ENCODE measurements at regions of chr3 and their contacts with region 1.

Region 1: GRCh38 chr3:141913150-141913811 is 36.8 kb downstream of the ATP1B3 start:
- DNase-seq: peak; percentile 71 to 87 (median 87)
- H3K4me3 ChIP-seq: no peak overlapping the region
- H3K27ac ChIP-seq: no peak overlapping the region
- H3K4me1 ChIP-seq: no peaks in the 10 kb centered on the region
- H3K27me3 ChIP-seq: no peaks in the 10 kb centered on the region

Region 2: DNA sequence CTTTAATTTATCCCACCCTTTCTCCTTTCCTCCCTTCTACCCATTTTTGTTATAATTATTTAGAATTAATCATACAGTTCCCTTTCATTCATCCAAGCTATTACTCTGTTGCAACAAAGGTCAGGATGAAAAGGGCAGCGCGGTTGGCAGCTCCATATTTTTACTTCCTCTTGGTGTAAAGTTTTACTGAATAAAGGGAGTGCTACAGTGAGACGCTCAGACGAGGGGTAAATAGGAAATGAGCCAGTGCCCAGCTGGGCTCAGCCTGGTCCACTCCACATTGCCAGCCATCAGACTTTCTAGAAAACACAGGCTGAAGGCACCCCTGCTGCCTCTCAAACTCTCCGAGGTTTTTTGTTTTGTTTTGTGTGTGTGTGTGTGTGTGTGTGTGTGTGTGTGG is 566.9 kb before region 1 on chr3:
- CTCF ChIA-PET with region 1: no interaction called
- POLR2A ChIA-PET with region 1: no interaction called
- DNase-seq: no peak
- H3K4me3 ChIP-seq: no peak overlapping the region
- H3K27ac ChIP-seq: no peak overlapping the region
- H3K4me1 ChIP-seq: no peaks in the 10 kb centered on the region
- H3K27me3 ChIP-seq: no peaks in the 10 kb centered on the region

Region 3: DNA sequence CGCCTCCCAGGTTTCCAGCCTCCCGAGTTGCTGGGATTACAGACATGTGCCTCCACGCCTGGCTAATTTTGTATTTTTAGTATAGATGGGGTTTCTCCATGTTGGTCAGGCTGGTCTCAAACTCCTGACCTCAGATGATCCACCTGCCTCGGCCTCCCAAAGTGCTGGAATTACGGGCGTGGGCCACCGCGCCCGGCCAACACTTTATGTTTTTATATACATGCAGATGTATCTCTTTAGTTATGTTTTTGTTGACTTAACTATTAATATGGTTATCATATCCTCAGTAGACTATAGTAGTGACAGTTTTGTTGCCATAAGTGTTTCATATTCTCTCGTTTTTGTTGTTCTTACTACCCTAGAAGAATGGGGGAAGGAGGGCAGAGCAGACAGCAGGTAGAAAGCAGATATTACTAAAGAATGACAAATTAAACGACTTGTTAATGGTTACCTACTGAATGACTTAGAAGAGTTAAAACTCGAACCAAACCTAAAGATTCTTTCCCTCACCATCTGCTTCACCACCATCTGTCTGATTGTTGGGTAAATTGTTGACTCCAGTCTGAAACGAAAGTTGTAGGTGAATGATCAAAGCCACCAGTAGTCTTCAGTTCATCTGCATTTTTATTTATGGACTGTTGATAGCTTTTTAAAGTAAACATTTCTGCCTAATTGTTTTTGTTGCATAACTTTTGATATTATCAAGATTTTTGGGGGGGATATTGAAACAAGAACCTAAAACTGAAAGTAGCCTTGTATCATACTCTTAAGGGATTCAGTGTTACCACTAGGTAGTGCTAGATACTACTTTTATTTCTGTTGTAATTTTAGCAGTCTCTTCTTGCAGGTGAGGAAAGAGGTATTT is 337.2 kb before region 1 on chr3:
- CTCF ChIA-PET with region 1: interaction called, 20 read pairs
- POLR2A ChIA-PET with region 1: no interaction called
- DNase-seq: peak; percentile 46 to 76 (median 72)
- H3K4me3 ChIP-seq: no peak overlapping the region
- H3K27ac ChIP-seq: no peak overlapping the region
- H3K4me1 ChIP-seq: no peaks in the 10 kb centered on the region
- H3K27me3 ChIP-seq: no peaks in the 10 kb centered on the region

Region 4: DNA sequence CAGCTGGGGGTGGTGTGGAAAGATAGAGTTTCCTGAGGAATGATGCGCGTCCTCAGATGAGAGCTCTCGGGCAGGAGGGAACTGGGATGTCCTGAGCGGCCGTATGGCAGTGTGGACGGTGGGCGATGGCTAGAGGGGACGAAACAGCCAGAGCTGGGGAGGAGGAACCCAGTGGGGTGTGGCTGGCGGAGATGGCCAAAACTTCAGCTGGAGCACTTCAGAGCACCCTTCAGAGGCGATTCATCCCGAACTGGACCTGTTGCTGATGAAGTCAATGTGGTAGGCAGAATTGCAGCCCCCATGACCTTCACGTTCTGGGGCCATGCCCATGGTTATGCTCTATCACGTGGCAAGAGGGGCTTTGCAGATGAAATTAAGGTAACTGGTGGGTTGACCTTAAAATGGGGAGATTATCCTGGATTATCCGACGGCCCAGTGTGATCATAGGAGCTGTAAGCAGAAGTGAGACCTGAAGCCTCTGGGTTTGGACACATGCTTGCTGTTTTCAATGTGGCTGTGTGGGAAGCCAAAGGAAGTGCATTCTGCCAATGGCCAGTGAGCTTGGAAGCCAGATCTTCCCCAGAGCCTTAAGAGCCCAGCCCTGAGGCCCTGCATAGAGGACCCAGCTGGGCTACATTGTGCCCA is 15.5 kb after region 1 on chr3:
- CTCF ChIA-PET with region 1: interaction called, 26 read pairs
- POLR2A ChIA-PET with region 1: no interaction called
- DNase-seq: no peak
- H3K4me3 ChIP-seq: no peak overlapping the region
- H3K27ac ChIP-seq: no peak overlapping the region
- H3K4me1 ChIP-seq: peaks cover 0 to 3% (median 2%) of the 10 kb centered on the region in 4 experiments
- H3K27me3 ChIP-seq: no peaks in the 10 kb centered on the region

Region 5: DNA sequence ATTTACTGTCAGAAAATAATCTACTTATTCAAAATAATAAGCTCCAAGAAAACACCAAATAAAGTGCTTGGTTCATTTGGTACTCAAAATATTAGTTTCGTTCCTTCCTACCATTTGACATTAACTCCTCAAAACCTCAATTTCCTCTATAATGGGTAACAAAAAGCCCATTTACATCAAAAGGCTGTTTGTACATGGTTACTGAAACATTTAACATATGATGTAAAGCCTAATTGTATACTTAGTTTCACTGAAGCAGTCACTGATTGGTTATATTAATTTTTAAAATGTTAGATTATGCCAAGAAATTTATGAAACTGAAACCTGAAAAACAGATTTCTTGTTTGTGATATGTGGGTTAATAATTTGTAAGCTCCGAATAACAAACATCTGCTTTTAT is 519.8 kb after region 1 on chr3:
- CTCF ChIA-PET with region 1: no interaction called
- POLR2A ChIA-PET with region 1: no interaction called
- DNase-seq: no peak
- H3K4me3 ChIP-seq: no peak overlapping the region
- H3K27ac ChIP-seq: no peak overlapping the region
- H3K4me1 ChIP-seq: no peaks in the 10 kb centered on the region
- H3K27me3 ChIP-seq: no peaks in the 10 kb centered on the region

Measured in common myeloid progenitor, CD34-positive (primary cell).